ENCODE measurements at regions of chr12 and their contacts with region 1.

Region 1: DNA sequence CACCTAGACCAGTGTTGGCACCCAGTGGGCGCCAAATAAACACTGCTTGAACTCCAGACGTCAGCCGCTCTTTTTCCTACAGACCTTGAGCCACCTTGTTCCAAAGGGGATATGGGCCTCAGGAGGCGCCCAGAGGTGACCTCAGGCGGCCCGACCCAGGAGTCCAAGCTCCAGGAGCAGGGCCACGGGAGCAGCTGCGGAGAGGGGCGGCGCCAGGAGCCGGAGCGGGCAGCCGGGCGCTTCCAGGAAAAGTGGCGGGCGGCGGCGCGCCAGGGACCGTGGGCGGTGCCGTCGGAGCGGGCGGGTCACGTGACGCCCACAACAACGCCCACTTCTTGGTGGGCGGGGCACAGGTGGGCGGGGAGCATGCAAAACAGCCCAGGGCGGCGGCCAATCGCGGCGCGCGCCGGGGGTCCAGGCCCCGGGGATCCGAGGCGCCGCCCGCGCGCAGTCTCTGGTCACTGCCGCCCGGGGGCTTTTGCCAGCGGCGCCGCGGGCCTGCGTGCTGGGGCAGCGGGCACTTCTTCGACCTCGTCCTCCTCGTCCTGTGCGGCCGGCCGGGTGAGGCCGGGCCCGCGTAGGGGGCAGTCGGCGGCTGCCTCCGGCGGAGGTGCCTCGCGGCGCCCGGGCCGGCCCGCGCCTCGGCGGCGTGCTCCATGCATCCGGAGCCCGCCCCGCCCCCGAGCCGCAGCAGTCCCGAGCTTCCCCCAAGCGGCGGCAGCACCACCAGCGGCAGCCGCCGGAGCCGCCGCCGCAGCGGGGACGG is at the start of gene ORAI1:
- DNase-seq: peak; percentile 99
- ATAC-seq: peak; percentile 70
- H3K4me3 ChIP-seq: peak within 1 kb of the TSS; percentile 79
- H3K27ac ChIP-seq: peak within 1 kb of the TSS; percentile 29
- H3K4me1 ChIP-seq: peaks cover 34% of the 10 kb centered on the region
- H3K27me3 ChIP-seq: no peaks in the 10 kb centered on the region
- CTCF ChIP-seq: no peak
- total RNA-seq, gene ORAI1: 31.4 and 35.0 TPM in 2 replicates

Region 2: GRCh38 chr12:121536899-121537813 is 89.1 kb before region 1 on chr12:
- CTCF ChIA-PET with region 1: no interaction called
- POLR2A ChIA-PET with region 1: no interaction called
- intact Hi-C with region 1: loop called (anchors 5 kb)
- DNase-seq: peak; percentile 66
- ATAC-seq: peak; percentile 78
- H3K4me3 ChIP-seq: peak overlapping the region; percentile 89
- H3K27ac ChIP-seq: no peak overlapping the region
- H3K4me1 ChIP-seq: peaks cover 18% of the 10 kb centered on the region; the same call in 1 of the 2 replicates
- H3K27me3 ChIP-seq: no peaks in the 10 kb centered on the region
- CTCF ChIP-seq: no peak

Region 3: GRCh38 chr12:121579981-121580868 is 46.0 kb before region 1 on chr12:
- CTCF ChIA-PET with region 1: interaction called, 5 read pairs
- POLR2A ChIA-PET with region 1: interaction called, 6 read pairs
- intact Hi-C with region 1: loop called (anchors 2 kb)
- DNase-seq: peak; percentile 63
- ATAC-seq: peak; percentile 63
- H3K4me3 ChIP-seq: peak overlapping the region; percentile 82
- H3K27ac ChIP-seq: peak overlapping the region; percentile 38
- H3K4me1 ChIP-seq: peaks cover 50% of the 10 kb centered on the region
- H3K27me3 ChIP-seq: no peaks in the 10 kb centered on the region
- CTCF ChIP-seq: no peak

Region 4: GRCh38 chr12:121668750-121669520 is 42.7 kb after region 1 on chr12:
- CTCF ChIA-PET with region 1: interaction called, 9 read pairs
- POLR2A ChIA-PET with region 1: no interaction called
- intact Hi-C with region 1: loop called (anchors 2 kb)
- DNase-seq: peak; percentile 61
- ATAC-seq: no peak
- H3K4me3 ChIP-seq: no peak overlapping the region
- H3K27ac ChIP-seq: no peak overlapping the region
- H3K4me1 ChIP-seq: peaks cover 10% of the 10 kb centered on the region
- H3K27me3 ChIP-seq: no peaks in the 10 kb centered on the region
- CTCF ChIP-seq: peak; percentile 88

Region 5: DNA sequence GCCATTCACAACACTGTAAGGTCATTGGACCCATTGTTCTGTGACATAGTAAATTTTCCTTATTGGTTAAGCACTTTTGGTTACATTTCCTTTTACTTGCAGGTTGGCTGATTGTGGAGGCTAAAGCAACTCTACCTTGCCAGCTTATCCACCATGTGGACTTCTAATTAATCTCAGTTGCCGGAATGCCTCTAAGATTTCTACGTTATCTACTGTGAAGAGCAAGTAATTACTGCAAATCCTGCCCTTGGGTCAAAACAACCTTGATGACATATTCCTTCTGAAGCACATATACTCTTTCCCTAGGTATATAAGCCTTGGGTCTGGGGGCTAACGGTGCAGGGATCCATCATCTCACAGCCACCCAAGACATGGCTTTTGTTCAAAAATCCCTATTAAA is 62.7 kb after region 1 on chr12:
- CTCF ChIA-PET with region 1: interaction called, 3 read pairs
- POLR2A ChIA-PET with region 1: no interaction called
- intact Hi-C with region 1: loop called (anchors 2 kb)
- DNase-seq: no peak
- ATAC-seq: no peak
- H3K4me3 ChIP-seq: no peak overlapping the region
- H3K27ac ChIP-seq: no peak overlapping the region
- H3K4me1 ChIP-seq: no peaks in the 10 kb centered on the region
- H3K27me3 ChIP-seq: no peaks in the 10 kb centered on the region
- CTCF ChIP-seq: no peak

Measured in PC-3 (cell line).